Calu3 (cell line): ENCODE measurements at regions of chr5 and their contacts with region 1.

Region 1: DNA sequence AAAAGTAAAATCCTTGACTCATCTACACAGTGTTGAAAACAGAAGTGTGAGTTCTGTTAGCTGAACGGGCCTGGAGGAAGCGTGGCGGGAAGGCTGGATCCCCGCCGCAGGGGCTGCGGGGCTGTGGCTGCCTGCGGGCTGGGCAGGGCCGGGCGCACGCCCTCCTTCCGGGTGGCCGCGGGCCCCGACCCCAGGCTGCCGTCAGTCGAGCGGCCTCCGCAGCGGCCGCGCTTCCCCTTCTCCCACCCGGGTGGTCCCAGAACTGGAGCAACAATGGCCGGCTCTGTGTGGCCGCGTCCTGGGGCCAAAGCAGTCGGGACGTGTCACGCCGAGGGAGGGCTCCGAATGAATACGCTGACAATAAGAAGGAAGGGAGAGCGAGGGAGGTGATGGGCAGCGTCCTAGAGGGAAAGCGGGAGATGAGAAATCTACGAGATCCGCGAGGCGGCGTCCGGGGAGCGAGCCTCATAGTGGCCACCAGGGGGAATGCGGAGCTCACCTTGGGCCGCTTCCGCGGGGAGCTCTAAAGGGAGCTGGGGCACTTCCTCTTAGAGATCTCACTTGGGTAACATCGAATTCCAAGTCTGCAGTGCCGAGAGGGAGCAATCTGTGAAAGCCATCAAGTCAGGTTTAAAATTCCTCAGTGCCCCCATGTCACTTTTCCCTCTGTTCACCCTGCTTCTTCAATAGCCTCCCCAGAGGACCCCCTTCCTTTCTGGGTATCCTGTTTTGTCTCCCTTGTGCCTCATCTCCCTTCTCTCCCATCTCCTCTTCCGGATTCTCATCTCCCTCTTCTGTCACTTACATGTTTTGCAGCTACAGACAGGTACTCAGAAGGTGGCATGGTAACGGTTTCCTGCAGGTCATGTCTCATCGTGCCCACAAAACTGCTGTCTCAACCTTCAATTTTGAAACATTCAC is 83.9 kb downstream of the SLC1A3 start:
- DNase-seq: peak; percentile 87
- H3K4me3 Mint-ChIP-seq: peak overlapping the region; percentile 74
- H3K27ac Mint-ChIP-seq: peak overlapping the region; percentile 27
- H3K4me1 Mint-ChIP-seq: peaks cover 8% of the 10 kb centered on the region
- H3K27me3 Mint-ChIP-seq: no peaks in the 10 kb centered on the region
- CTCF ChIP-seq: peak; percentile 92

Region 2: DNA sequence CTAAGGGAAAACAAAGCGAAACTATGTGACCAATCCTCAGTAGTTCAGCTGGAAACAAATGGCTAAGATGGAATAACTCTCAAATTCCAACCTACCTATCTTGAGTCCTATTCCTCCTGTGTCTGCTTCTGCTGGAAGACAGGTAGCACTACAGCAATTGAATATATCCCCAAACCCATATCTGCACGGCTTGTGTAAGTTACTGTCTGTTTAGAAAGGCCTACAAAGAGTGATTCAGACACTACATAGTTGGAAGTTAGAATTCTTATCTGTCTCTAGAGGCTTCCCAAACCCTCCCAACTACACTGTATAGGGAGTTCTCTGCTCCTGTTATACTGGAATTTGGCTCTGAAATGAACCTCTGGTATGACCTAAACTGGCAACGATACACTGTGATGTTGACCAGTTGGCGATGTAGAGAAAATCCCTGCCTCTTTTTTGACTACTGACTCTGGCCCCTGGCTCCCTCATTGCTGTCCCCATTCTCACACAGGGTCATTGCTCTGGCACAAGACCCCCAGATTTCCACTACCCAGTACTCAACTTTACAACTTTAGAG is 426.0 kb before region 1 on chr5:
- CTCF ChIA-PET with region 1: no interaction called
- intact Hi-C with region 1: loop called (anchors 1 kb)
- DNase-seq: no peak
- H3K4me3 Mint-ChIP-seq: no peak overlapping the region
- H3K27ac Mint-ChIP-seq: no peak overlapping the region
- H3K4me1 Mint-ChIP-seq: no peaks in the 10 kb centered on the region
- H3K27me3 Mint-ChIP-seq: no peaks in the 10 kb centered on the region
- CTCF ChIP-seq: no peak

Region 3: DNA sequence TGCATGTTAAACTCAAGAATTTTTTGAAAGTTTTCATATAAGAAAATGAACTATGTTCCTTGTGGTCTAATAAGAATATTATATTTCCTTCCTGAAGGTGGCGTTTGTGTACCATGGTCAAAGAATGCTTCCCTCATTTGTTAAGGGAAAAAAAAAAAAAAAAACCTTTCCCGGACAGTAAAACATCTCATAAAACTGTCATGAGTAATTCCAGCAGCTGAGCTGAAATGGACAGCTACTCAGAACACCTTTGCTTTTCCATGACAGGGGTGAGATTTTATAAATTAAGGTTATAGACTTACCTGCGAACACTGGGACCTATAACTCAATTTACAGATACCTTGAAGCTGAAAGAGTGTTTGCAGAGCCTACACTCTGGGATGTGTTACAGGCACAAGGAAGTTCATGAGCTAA is 275.4 kb before region 1 on chr5:
- CTCF ChIA-PET with region 1: interaction called, 6 read pairs
- intact Hi-C with region 1: loop called (anchors 1 kb)
- DNase-seq: peak; percentile 9
- H3K4me3 Mint-ChIP-seq: no peak overlapping the region
- H3K27ac Mint-ChIP-seq: no peak overlapping the region
- H3K4me1 Mint-ChIP-seq: peaks cover 8% of the 10 kb centered on the region
- H3K27me3 Mint-ChIP-seq: peaks cover 21% of the 10 kb centered on the region
- CTCF ChIP-seq: no peak

Region 4: GRCh38 chr5:36507332-36507952 is 182.9 kb before region 1 on chr5:
- CTCF ChIA-PET with region 1: no interaction called
- intact Hi-C with region 1: loop called (anchors 2 kb)
- DNase-seq: peak; percentile 85
- H3K4me3 Mint-ChIP-seq: no peak overlapping the region
- H3K27ac Mint-ChIP-seq: no peak overlapping the region
- H3K4me1 Mint-ChIP-seq: peaks cover 7% of the 10 kb centered on the region
- H3K27me3 Mint-ChIP-seq: peaks cover 42% of the 10 kb centered on the region
- CTCF ChIP-seq: peak; percentile 82

Region 5: DNA sequence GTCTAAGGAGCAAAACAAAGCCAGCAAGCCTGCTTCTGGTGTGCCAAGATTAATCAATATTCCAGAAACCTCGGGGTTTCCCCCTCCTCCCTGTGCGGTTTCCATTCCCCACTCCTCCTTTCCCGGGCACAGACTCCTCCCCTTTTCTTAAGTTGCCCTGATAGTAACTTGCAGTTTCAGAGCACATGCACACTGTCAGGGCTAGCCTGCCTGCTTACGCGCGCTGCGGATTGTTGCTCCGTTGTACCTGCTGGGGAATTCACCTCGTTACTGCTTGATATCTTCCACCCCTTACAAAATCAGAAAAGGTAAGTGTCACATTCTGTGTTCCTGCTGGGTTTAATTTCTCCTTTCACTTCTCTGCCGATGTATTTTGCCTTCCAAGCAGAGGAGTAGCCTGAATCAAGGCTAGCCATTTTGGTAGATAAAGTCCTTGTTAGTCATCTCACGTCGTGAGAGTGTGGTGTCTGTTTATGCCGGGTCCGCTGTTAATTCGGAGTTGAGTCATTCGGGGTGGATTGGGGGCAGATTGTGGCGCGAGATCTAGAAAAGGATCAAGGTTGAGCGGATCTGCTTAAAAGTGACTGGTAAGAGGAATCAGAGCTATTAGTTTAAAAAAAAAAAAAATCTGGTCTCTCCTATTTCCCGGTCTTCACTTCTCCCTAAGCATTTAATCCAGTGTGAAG is 83.7 kb before region 1 on chr5 and contains the start of gene SLC1A3:
- CTCF ChIA-PET with region 1: interaction called, 5 read pairs
- intact Hi-C with region 1: loop called (anchors 1 kb)
- DNase-seq: peak; percentile 70
- H3K4me3 Mint-ChIP-seq: peak within 1 kb of the TSS; percentile 96
- H3K27ac Mint-ChIP-seq: peak within 1 kb of the TSS; percentile 78
- H3K4me1 Mint-ChIP-seq: no peaks in the 10 kb centered on the region
- H3K27me3 Mint-ChIP-seq: peaks cover 13% of the 10 kb centered on the region
- CTCF ChIP-seq: no peak
- total RNA-seq, gene SLC1A3: 6.0 and 7.9 TPM in 2 replicates

Region 6: DNA sequence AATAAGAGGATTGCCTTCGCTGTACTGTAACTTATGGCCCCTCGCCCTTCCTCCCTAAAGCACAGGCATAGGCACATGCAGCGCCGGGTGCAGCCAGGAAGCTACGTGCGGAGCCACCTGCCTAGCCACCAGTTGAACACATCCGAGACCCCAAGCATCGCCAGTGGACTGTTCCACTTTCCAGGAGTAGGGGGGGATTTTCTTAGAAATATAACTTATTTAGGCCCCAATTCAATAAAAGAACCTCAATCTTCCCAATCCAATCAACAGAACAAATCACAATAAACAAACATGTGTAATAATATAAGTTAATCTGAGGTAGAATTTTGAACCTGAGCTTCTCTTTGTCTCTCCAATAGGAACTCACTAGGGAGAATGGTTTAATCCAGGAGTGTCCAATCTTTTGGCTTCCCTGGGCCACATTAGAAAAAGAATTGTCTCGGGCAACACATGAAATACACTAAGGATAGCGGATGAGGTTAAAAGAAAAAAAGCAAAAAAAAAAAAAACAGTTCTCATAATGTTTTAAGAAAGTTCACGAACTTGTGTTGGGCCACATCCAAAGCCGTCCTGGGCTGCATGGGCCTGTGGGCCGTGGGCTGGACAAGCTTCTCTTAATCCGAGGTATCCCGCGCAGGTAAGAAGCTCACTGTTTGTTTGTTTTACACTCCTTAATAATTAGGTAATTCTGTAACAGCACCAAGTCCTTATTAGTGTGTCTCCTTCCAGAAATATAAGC is 164.3 kb after region 1 on chr5:
- CTCF ChIA-PET with region 1: no interaction called
- intact Hi-C with region 1: no loop called
- DNase-seq: no peak
- H3K4me3 Mint-ChIP-seq: no peak overlapping the region
- H3K27ac Mint-ChIP-seq: no peak overlapping the region
- H3K4me1 Mint-ChIP-seq: no peaks in the 10 kb centered on the region
- H3K27me3 Mint-ChIP-seq: peaks cover 26% of the 10 kb centered on the region
- CTCF ChIP-seq: no peak